GM12878 (cell line): ENCODE measurements at regions of chr16 and their contacts with region 1.

Region 1: GRCh38 chr16:10918294-10919002 is 23.8 kb downstream of the DEXI start:
- DNase-seq: peak; percentile 77
- ATAC-seq: peak; percentile 89
- H3K4me3 ChIP-seq: no peak overlapping the region
- H3K27ac ChIP-seq: peak overlapping the region; percentile 4; the same call in 1 of the 2 replicates
- H3K4me1 ChIP-seq: peaks cover 25% of the 10 kb centered on the region
- H3K27me3 ChIP-seq: no peaks in the 10 kb centered on the region
- CTCF ChIP-seq: peak; percentile 91 to 99 (median 99)
- EP300 ChIP-seq: no peak
- POLR2A ChIP-seq: peak; percentile 50; the same call in 1 of the 2 replicates
- RAD21 ChIP-seq: peak; percentile 97

Region 2: DNA sequence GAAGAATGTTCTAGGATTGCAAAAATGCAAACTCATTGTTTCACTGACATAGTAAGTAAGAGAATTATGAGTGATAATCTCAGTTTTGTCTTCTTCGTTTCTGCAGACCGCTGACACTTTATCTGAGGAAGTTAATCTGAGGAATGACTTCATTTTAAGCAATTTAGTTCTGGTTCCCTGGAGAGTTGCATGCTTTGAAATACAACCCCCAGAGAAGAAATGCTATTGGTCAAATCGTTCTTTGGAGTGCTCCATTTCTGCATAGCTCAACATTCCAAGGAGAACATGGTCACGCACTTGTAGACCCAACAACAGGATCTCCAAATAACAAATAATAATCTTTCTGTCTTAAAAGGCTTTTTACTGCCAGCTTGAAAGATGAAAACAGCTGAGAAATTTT is 1163.4 kb before region 1 on chr16:
- CTCF ChIA-PET with region 1: no interaction called
- POLR2A ChIA-PET with region 1: no interaction called
- RAD21 ChIA-PET with region 1: no interaction called
- SMC1A ChIA-PET with region 1: no interaction called
- in situ Hi-C with region 1: no loop called
- intact Hi-C with region 1: no loop called
- DNase-seq: no peak
- ATAC-seq: no peak
- H3K4me3 ChIP-seq: no peak overlapping the region
- H3K27ac ChIP-seq: no peak overlapping the region
- H3K4me1 ChIP-seq: no peaks in the 10 kb centered on the region
- H3K27me3 ChIP-seq: no peaks in the 10 kb centered on the region
- CTCF ChIP-seq: no peak
- EP300 ChIP-seq: no peak
- POLR2A ChIP-seq: no peak
- RAD21 ChIP-seq: no peak

Region 3: DNA sequence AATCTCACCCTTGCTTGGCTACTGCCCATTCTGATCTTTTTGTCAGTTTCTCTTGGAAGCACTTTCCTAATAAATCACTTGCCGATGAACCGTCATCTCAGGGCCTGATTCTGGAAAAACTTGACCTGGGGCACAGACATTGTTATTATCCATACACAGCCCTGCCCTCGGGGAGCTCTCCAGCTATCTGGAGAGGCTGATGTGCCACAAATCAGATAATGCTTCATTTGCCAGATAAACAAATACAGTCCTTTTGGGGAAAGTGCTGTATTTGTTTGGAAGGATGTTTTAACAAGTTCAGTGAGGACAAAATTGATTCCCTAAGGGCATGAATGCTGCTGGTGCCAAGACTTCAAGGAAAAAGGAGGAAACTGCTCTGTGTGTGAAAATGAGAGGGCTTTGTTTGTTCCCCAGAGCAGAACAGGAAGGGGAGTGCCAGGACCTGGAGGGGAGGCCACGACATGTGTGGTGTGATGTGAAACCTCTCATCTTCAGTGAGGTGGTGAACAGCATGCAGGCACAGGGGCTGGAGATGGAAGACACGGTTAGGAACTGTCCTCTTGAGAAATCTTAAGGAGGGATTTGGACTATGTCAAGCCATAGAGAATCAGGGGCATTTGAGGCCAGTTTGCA is 689.8 kb before region 1 on chr16:
- CTCF ChIA-PET with region 1: no interaction called
- POLR2A ChIA-PET with region 1: no interaction called
- RAD21 ChIA-PET with region 1: no interaction called
- SMC1A ChIA-PET with region 1: no interaction called
- in situ Hi-C with region 1: no loop called
- intact Hi-C with region 1: no loop called
- DNase-seq: peak; percentile 28
- ATAC-seq: peak; percentile 94
- H3K4me3 ChIP-seq: no peak overlapping the region
- H3K27ac ChIP-seq: no peak overlapping the region
- H3K4me1 ChIP-seq: peaks cover 6% of the 10 kb centered on the region
- H3K27me3 ChIP-seq: no peaks in the 10 kb centered on the region; a peak in 1 of 4 replicates
- CTCF ChIP-seq: no peak
- EP300 ChIP-seq: no peak
- POLR2A ChIP-seq: no peak
- RAD21 ChIP-seq: no peak

Region 4: DNA sequence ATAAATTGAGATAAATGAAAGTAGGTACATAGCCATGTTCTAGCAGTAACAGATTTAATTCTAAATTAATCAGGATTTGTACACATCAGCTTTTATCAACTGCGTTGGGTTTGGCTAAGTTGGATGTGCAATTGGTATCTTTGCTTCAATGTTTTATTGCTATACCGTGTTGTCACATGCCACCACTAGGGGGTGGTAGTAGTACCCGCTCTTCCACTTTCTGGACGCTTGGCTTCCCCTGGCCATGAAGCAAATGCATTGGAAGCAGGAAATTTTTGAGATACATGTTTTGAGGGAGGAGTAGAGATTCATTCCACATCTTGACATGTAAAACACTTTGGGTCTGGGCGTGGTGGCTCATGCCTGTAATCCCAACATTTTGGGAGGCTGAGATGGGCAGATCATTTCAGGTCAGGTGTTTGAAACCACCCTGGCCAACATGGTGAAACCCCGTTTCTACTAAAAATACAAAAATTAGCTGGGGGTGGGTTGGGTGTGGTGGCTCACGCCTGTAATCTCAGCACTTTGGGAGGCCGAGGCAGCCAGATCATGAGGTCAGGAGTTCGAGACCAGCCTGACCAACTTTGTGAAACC is 396.7 kb before region 1 on chr16:
- CTCF ChIA-PET with region 1: interaction called, 6 read pairs
- POLR2A ChIA-PET with region 1: no interaction called
- RAD21 ChIA-PET with region 1: interaction called, 8 read pairs
- SMC1A ChIA-PET with region 1: interaction called, 6 read pairs
- in situ Hi-C with region 1: loop called (anchors 5 kb)
- intact Hi-C with region 1: loop called (anchors 2 kb)
- DNase-seq: no peak
- ATAC-seq: peak; percentile 91
- H3K4me3 ChIP-seq: no peak overlapping the region
- H3K27ac ChIP-seq: no peak overlapping the region
- H3K4me1 ChIP-seq: no peaks in the 10 kb centered on the region
- H3K27me3 ChIP-seq: no peaks in the 10 kb centered on the region
- CTCF ChIP-seq: peak; percentile 78 to 86 (median 81)
- EP300 ChIP-seq: no peak
- POLR2A ChIP-seq: no peak
- RAD21 ChIP-seq: peak; percentile 81

Region 5: DNA sequence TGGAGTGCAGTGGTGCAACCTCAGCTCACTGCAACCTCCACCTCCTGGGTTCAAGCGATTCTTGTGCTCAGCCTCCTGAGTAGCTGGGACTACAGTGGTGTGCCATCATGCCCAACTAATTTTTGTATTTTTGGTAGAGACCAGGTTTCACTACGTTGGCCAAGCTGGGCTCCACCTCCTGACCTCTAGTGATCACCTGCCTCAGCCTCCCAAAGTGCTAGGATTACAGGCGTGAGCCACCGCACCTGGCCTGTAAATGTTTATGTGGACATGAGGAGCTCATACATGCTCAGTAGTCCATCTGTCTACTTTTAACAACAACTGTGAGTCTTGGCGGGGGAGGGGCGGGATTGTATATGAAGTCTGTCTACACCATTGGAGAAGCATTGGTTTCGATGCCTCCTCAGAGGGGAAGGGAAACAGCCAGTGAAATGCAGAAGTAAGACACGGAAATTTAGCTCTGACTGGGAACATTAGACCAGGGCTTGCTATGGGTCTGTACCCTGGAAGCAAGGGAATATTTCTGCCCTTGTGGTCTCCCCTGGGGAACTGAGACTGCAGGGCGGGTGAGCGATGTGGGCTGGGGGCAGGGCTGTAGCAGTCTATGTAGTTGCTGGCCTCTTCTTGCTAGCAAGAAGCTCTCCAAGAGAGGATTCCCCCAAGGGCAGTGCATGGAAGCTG is 165.5 kb before region 1 on chr16:
- CTCF ChIA-PET with region 1: interaction called, 13 read pairs
- POLR2A ChIA-PET with region 1: no interaction called
- RAD21 ChIA-PET with region 1: interaction called, 3 read pairs
- SMC1A ChIA-PET with region 1: interaction called, 15 read pairs
- in situ Hi-C with region 1: no loop called
- intact Hi-C with region 1: no loop called
- DNase-seq: peak; percentile 74
- ATAC-seq: peak; percentile 90
- H3K4me3 ChIP-seq: 0 out of 2 replicates have a peak overlapping the region, but pooled peaks have one; percentile 2
- H3K27ac ChIP-seq: peak overlapping the region; percentile 49
- H3K4me1 ChIP-seq: peaks cover 31% of the 10 kb centered on the region
- H3K27me3 ChIP-seq: no peaks in the 10 kb centered on the region
- CTCF ChIP-seq: no peak
- EP300 ChIP-seq: peak in 1 of 2 experiments; percentile 72; a peak in 2 of 4 replicates
- POLR2A ChIP-seq: no peak
- RAD21 ChIP-seq: no peak

Region 6: DNA sequence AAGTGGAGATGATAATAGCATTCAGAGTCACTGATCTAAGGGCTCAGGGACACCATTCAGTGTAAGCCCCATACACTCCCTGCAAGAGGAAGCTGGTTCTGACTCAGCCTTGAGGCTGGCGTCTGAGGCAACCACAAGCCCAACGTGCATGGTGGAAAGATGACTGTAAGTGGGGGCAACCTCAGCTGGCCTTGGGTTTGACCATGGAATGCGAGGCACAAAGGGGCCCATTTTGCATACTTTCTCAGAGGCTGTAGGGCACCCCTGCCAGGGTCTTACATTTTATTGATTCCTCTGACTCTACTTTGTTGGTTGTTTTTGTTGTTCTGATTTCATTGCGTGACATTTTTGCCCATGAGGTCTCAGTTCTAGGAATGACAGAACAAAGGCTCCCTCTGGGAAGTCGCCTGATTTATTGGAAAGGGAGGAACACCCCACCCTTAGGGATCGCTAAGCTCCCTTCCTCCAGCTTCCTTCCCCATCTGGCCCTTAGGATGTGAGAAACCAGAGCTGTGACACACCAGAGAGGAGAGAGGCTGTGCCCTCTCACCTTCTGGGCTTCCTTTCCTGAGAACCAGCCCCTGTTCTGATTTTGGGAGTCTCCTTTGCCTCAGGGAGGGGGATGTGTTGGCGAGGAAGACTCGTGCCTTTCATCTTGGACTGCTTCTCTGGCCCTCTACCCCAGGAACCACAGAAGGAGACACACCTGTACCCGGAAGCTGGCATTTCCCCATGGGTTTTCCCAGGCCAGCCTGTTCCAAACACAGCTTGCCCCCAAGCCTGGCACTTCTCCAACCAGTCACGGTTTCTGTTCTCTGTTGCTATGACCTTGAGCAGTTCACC is 47.1 kb before region 1 on chr16:
- CTCF ChIA-PET with region 1: interaction called, 91 read pairs
- POLR2A ChIA-PET with region 1: interaction called, 4 read pairs
- RAD21 ChIA-PET with region 1: interaction called, 87 read pairs
- SMC1A ChIA-PET with region 1: interaction called, 79 read pairs
- in situ Hi-C with region 1: no loop called
- intact Hi-C with region 1: loop called (anchors 1 kb)
- DNase-seq: peak; percentile 86
- ATAC-seq: peak; percentile 78
- H3K4me3 ChIP-seq: no peak overlapping the region
- H3K27ac ChIP-seq: peak overlapping the region; percentile 65
- H3K4me1 ChIP-seq: peaks cover 84% of the 10 kb centered on the region
- H3K27me3 ChIP-seq: no peaks in the 10 kb centered on the region
- CTCF ChIP-seq: no peak
- EP300 ChIP-seq: peak; percentile 88 to 90
- POLR2A ChIP-seq: 0 out of 2 replicates have a peak, but pooled peaks have one; percentile 27
- RAD21 ChIP-seq: peak; percentile 16; the same call in 1 of the 2 replicates

Region 7: GRCh38 chr16:10888320-10888937 is 30.0 kb before region 1 on chr16:
- CTCF ChIA-PET with region 1: interaction called, 38 read pairs
- POLR2A ChIA-PET with region 1: interaction called, 16 read pairs
- RAD21 ChIA-PET with region 1: interaction called, 48 read pairs
- SMC1A ChIA-PET with region 1: interaction called, 21 read pairs
- in situ Hi-C with region 1: no loop called
- intact Hi-C with region 1: loop called (anchors 2 kb)
- DNase-seq: no peak
- ATAC-seq: peak; percentile 7; the same call in 1 of the 3 replicates
- H3K4me3 ChIP-seq: peak overlapping the region; percentile 67
- H3K27ac ChIP-seq: peak overlapping the region; percentile 59
- H3K4me1 ChIP-seq: peaks cover 96% of the 10 kb centered on the region
- H3K27me3 ChIP-seq: no peaks in the 10 kb centered on the region
- CTCF ChIP-seq: no peak
- EP300 ChIP-seq: no peak; a peak in 1 of 4 replicates
- POLR2A ChIP-seq: no peak
- RAD21 ChIP-seq: 0 out of 2 replicates have a peak, but pooled peaks have one; percentile 17

Region 8: GRCh38 chr16:10906914-10907756 is 11.3 kb before region 1 on chr16:
- CTCF ChIA-PET with region 1: interaction called, 8 read pairs
- POLR2A ChIA-PET with region 1: interaction called, 10 read pairs
- RAD21 ChIA-PET with region 1: interaction called, 6 read pairs
- SMC1A ChIA-PET with region 1: interaction called, 4 read pairs
- in situ Hi-C with region 1: no loop called
- intact Hi-C with region 1: no loop called
- DNase-seq: no peak
- ATAC-seq: no peak
- H3K4me3 ChIP-seq: no peak overlapping the region
- H3K27ac ChIP-seq: no peak overlapping the region
- H3K4me1 ChIP-seq: peaks cover 7% of the 10 kb centered on the region
- H3K27me3 ChIP-seq: no peaks in the 10 kb centered on the region
- CTCF ChIP-seq: no peak
- EP300 ChIP-seq: no peak
- POLR2A ChIP-seq: no peak
- RAD21 ChIP-seq: no peak

Region 9: DNA sequence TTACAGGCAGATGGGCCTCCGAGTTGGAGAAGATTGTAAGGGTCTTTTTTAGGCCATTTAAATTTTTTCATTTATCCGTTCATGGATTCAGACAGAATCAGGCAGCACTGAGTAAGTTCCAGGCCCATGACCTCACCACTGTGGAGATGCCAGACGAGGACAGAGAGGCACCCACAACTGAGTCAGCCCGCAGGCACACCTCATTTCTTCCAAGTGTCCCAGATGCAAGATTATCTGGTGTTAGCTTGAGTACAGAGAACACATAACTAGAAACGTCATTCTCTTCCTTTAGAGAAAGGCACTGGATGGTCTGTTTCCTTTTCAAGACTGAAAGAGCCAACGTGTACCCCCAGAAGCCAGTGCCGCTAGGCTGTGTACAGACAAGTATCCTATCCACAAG is 42.8 kb after region 1 on chr16:
- CTCF ChIA-PET with region 1: no interaction called
- POLR2A ChIA-PET with region 1: no interaction called
- RAD21 ChIA-PET with region 1: no interaction called
- SMC1A ChIA-PET with region 1: no interaction called
- in situ Hi-C with region 1: no loop called
- intact Hi-C with region 1: no loop called
- DNase-seq: no peak
- ATAC-seq: no peak
- H3K4me3 ChIP-seq: no peak overlapping the region
- H3K27ac ChIP-seq: no peak overlapping the region
- H3K4me1 ChIP-seq: peaks cover 45% of the 10 kb centered on the region
- H3K27me3 ChIP-seq: no peaks in the 10 kb centered on the region
- CTCF ChIP-seq: no peak
- EP300 ChIP-seq: no peak
- POLR2A ChIP-seq: no peak
- RAD21 ChIP-seq: no peak

Region 10: GRCh38 chr16:11345040-11345862 is 426.8 kb after region 1 on chr16 and contains the start of gene RMI2:
- CTCF ChIA-PET with region 1: no interaction called
- POLR2A ChIA-PET with region 1: no interaction called
- RAD21 ChIA-PET with region 1: no interaction called
- SMC1A ChIA-PET with region 1: no interaction called
- in situ Hi-C with region 1: no loop called
- intact Hi-C with region 1: no loop called
- DNase-seq: peak; percentile 77
- ATAC-seq: peak; percentile 99
- H3K4me3 ChIP-seq: peak within 1 kb of the TSS; percentile 68
- H3K27ac ChIP-seq: peak within 1 kb of the TSS; percentile 57
- H3K4me1 ChIP-seq: peaks cover 6% of the 10 kb centered on the region
- H3K27me3 ChIP-seq: no peaks in the 10 kb centered on the region
- CTCF ChIP-seq: no peak
- EP300 ChIP-seq: no peak
- POLR2A ChIP-seq: peak; percentile 88
- RAD21 ChIP-seq: no peak
- polyA plus RNA-seq, gene RMI2: 9.6 to 21.7 TPM